GM23248 (cell line): ENCODE measurements at regions of chr15 and their contacts with region 1.

Region 1: GRCh38 chr15:67501177-67501835 is 19.6 kb upstream of the C15orf61 start:
- DNase-seq: peak; percentile 61
- H3K4me3 ChIP-seq: no peak overlapping the region
- H3K27ac ChIP-seq: no peak overlapping the region
- H3K4me1 ChIP-seq: peaks cover 31% of the 10 kb centered on the region
- H3K27me3 ChIP-seq: no peaks in the 10 kb centered on the region

Region 2: GRCh38 chr15:67405208-67406191 is 95.8 kb before region 1 on chr15:
- in situ Hi-C with region 1: no loop called
- DNase-seq: peak; percentile 27
- H3K4me3 ChIP-seq: no peak overlapping the region
- H3K27ac ChIP-seq: no peak overlapping the region
- H3K4me1 ChIP-seq: no peaks in the 10 kb centered on the region
- H3K27me3 ChIP-seq: no peaks in the 10 kb centered on the region

Region 3: GRCh38 chr15:67839929-67840748 is 338.8 kb after region 1 on chr15 and contains the start of gene RNU6-1:
- in situ Hi-C with region 1: loop called (anchors 10 kb)
- DNase-seq: peak; percentile 96
- H3K4me3 ChIP-seq: peak within 1 kb of the TSS; percentile 84
- H3K27ac ChIP-seq: peak within 1 kb of the TSS; percentile 78
- H3K4me1 ChIP-seq: no peaks in the 10 kb centered on the region
- H3K27me3 ChIP-seq: peaks cover 9% of the 10 kb centered on the region
- total RNA-seq, gene RNU6-1: not detected in 2 replicates